Adrenal gland (tissue), 19 donors: ENCODE measurements at regions of chr3 and their contacts with region 1.

Region 1: DNA sequence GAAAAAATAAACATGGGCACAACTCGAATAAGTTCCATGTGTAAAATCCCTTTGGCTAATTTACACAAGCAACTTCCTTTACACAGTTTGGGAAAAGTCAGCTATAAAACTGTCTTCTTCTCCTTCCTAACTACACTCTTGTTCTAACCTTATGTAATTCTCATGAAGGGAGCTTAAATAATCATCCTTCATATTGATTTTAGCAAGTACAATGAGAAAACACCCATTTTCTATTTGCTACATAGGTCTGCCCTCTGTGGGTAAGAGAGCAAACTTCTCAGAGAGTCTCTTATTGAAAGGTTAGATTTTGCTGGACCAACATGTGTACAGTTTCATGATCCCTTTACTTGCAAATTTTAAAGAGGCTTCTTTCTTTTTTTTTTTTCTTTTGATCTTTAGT is 398.5 kb downstream of the ROBO1 start:
- DNase-seq: no peak
- H3K4me3 ChIP-seq: no peak overlapping the region
- H3K27ac ChIP-seq: no peak overlapping the region
- H3K4me1 ChIP-seq: no peaks in the 10 kb centered on the region
- H3K27me3 ChIP-seq: no peaks in the 10 kb centered on the region
- CTCF ChIP-seq: no peak
- POLR2A ChIP-seq: no peak

Region 2: DNA sequence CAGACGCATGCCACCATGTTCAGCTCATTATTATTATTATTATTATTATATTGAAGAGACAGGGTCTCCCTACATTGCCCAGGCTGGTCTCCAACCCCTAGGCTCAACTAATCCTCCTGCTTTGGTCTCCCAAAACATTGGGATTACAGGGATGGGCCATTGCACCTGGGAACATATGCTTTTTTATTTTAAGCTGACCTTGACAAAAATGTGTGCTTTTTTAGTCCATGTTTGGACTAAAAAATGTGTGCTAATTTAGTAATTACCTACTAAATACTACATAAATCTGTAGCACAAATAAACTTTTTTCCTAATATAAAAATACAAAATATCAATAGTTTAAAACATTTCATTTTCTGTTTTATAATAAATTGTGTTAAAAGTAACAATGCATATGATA is 294.7 kb before region 1 on chr3:
- intact Hi-C with region 1: no loop called
- DNase-seq: no peak
- H3K4me3 ChIP-seq: no peak overlapping the region
- H3K27ac ChIP-seq: no peak overlapping the region
- H3K4me1 ChIP-seq: no peaks in the 10 kb centered on the region
- H3K27me3 ChIP-seq: no peaks in the 10 kb centered on the region
- CTCF ChIP-seq: no peak
- POLR2A ChIP-seq: no peak

Region 3: DNA sequence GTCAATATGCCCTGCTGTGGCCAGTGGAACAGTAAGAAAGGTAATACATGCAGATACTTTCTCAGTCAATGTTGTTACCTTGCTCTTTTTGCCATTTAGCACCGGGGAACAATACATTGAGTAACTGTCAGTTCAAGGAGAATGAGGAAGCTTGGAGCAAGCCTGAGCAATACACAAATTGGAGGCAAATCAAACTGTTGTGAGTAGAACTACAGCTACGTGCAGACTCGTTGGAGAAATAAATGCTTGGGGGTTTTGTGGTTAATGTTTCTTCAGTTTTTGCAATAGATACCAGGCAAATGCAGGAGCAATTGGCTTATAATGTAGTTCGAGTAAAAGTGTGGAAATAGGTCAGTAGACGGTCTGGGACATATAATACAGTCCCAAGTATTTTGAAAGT is 985.8 kb after region 1 on chr3:
- intact Hi-C with region 1: loop called in 1 of 2 experiments (anchors 5 kb)
- DNase-seq: no peak
- H3K4me3 ChIP-seq: no peak overlapping the region
- H3K27ac ChIP-seq: no peak overlapping the region
- H3K4me1 ChIP-seq: no peaks in the 10 kb centered on the region
- H3K27me3 ChIP-seq: no peaks in the 10 kb centered on the region
- CTCF ChIP-seq: no peak
- POLR2A ChIP-seq: no peak